CD4-positive, alpha-beta memory T cell (primary cell): ENCODE measurements at regions of chr5 and their contacts with region 1.

Region 1: GRCh38 chr5:157148734-157149615 is 6.3 kb upstream of the MED7 start:
- DNase-seq: peak; percentile 84 to 88 (median 85)
- H3K4me3 ChIP-seq: no peak overlapping the region
- H3K4me3 Mint-ChIP-seq: peak overlapping the region in 6 of 8 donors; percentile 23 to 66 (median 42)
- H3K27ac ChIP-seq: no peak overlapping the region
- H3K27ac Mint-ChIP-seq: peak overlapping the region; percentile 31 to 94 (median 85)
- H3K4me1 ChIP-seq: peaks cover 36% of the 10 kb centered on the region
- H3K4me1 Mint-ChIP-seq: peaks cover 28 to 42% (median 35%) of the 10 kb centered on the region in 4 donors
- H3K27me3 ChIP-seq: no peaks in the 10 kb centered on the region
- H3K27me3 Mint-ChIP-seq: no peaks in the 10 kb centered on the region

Region 2: GRCh38 chr5:157100140-157100679 is 48.8 kb before region 1 on chr5:
- CTCF ChIA-PET with region 1: no interaction called
- POLR2A ChIA-PET with region 1: no interaction called
- intact Hi-C with region 1: no loop called
- DNase-seq: no peak
- H3K4me3 ChIP-seq: no peak overlapping the region
- H3K4me3 Mint-ChIP-seq: no peak overlapping the region
- H3K27ac ChIP-seq: no peak overlapping the region
- H3K27ac Mint-ChIP-seq: peak overlapping the region in 2 of 7 donors; percentile 36 to 49
- H3K4me1 ChIP-seq: no peaks in the 10 kb centered on the region
- H3K4me1 Mint-ChIP-seq: peaks cover 0 to 2% (median 0%) of the 10 kb centered on the region in 4 donors
- H3K27me3 ChIP-seq: no peaks in the 10 kb centered on the region
- H3K27me3 Mint-ChIP-seq: no peaks in the 10 kb centered on the region

Region 3: DNA sequence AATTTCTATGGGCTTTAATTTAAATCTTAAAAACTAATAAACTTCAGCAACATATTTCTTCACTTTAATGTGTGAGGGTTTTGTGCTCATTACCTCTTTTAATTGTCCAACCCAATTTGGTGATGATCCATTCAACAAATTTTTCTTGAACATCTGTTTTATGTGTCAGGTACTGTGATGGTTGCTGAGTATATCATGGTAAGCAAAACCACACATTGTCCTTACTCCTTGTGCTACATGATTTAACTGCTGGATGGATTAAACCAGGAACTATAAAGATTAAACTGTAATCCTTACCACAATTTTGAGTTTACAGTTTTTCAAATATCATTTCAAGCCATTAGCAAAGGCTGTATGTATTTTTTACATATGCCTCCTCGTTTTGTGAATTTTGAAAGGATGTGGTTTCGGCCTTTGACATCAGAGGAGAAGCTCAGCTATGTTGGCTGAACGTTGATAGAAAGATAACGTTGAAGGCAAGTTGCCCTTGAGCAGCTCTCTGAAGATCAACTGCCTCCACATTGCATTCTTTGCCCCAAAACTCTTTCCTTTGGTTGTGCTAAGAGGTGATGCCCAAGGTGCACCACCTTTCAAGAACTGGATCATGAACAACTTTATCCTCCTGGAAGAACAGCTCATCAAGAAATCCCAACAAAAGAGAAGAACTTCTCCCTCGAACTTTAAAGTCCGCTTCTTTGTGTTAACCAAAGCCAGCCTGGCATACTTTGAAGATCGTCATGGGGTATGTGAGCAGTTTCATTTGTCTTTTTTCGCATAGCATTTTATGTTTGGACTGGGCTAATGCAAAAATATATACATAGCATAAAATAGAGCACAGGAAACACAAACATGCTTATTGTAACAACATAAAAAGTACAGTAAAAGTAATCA is 31.6 kb after region 1 on chr5 and contains the start of gene ITK:
- CTCF ChIA-PET with region 1: interaction called, 22 read pairs
- POLR2A ChIA-PET with region 1: interaction called, 71 read pairs
- intact Hi-C with region 1: loop called (anchors 1 kb)
- DNase-seq: peak; percentile 77 to 85 (median 81)
- H3K4me3 ChIP-seq: peak within 1 kb of the TSS; percentile 83 to 99
- H3K4me3 Mint-ChIP-seq: peak within 1 kb of the TSS; percentile 97 to 100 (median 99)
- H3K27ac ChIP-seq: peak within 1 kb of the TSS; percentile 77
- H3K27ac Mint-ChIP-seq: peak within 1 kb of the TSS; percentile 84 to 99 (median 97)
- H3K4me1 ChIP-seq: peaks cover 47% of the 10 kb centered on the region
- H3K4me1 Mint-ChIP-seq: peaks cover 28 to 67% (median 43%) of the 10 kb centered on the region in 4 donors
- H3K27me3 ChIP-seq: no peaks in the 10 kb centered on the region
- H3K27me3 Mint-ChIP-seq: no peaks in the 10 kb centered on the region
- total RNA-seq, gene ITK: 398 to 421 TPM

Region 4: GRCh38 chr5:157204765-157205164 is 55.8 kb after region 1 on chr5:
- CTCF ChIA-PET with region 1: interaction called, 23 read pairs
- POLR2A ChIA-PET with region 1: interaction called, 13 read pairs
- intact Hi-C with region 1: no loop called
- DNase-seq: peak in 3 of 5 donors; percentile 44 to 74 (median 57)
- H3K4me3 ChIP-seq: no peak overlapping the region
- H3K4me3 Mint-ChIP-seq: peak overlapping the region; percentile 42 to 96 (median 74)
- H3K27ac ChIP-seq: peak overlapping the region; percentile 55
- H3K27ac Mint-ChIP-seq: peak overlapping the region; percentile 81 to 94 (median 87)
- H3K4me1 ChIP-seq: peaks cover 99% of the 10 kb centered on the region
- H3K4me1 Mint-ChIP-seq: peaks cover 60 to 96% (median 81%) of the 10 kb centered on the region in 4 donors
- H3K27me3 ChIP-seq: no peaks in the 10 kb centered on the region
- H3K27me3 Mint-ChIP-seq: no peaks in the 10 kb centered on the region

Region 5: DNA sequence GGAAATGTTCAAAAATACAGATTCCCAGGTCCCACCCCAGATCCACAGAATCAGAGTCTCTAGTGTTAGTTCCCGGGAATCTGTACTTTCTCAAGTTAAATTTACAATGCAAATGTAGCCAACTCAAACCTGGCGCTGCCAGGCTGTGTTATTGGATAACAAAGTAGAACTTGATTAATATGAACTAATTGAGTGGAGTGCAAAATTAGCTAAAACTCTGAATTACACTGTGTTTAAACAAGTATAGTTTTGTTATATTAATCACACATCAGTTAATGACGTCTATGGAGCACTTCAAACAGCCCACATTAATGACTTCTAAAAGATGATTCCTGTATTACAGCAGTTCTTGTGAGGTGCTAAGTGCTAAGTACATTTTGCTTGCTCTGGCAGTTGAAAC is 84.5 kb after region 1 on chr5:
- CTCF ChIA-PET with region 1: interaction called, 13 read pairs
- POLR2A ChIA-PET with region 1: interaction called, 7 read pairs
- intact Hi-C with region 1: loop called (anchors 1 kb)
- DNase-seq: peak; percentile 47 to 83 (median 74)
- H3K4me3 ChIP-seq: no peak overlapping the region
- H3K4me3 Mint-ChIP-seq: peak overlapping the region in 4 of 8 donors; percentile 25 to 55 (median 47)
- H3K27ac ChIP-seq: peak overlapping the region; percentile 41
- H3K27ac Mint-ChIP-seq: peak overlapping the region; percentile 88 to 94 (median 90)
- H3K4me1 ChIP-seq: peaks cover 76% of the 10 kb centered on the region
- H3K4me1 Mint-ChIP-seq: peaks cover 32 to 62% (median 47%) of the 10 kb centered on the region in 4 donors
- H3K27me3 ChIP-seq: no peaks in the 10 kb centered on the region
- H3K27me3 Mint-ChIP-seq: no peaks in the 10 kb centered on the region

Region 6: GRCh38 chr5:157271740-157272271 is 122.8 kb after region 1 on chr5:
- CTCF ChIA-PET with region 1: interaction called, 7 read pairs
- POLR2A ChIA-PET with region 1: interaction called, 49 read pairs
- intact Hi-C with region 1: no loop called
- DNase-seq: peak; percentile 89 to 96 (median 93)
- H3K4me3 ChIP-seq: peak overlapping the region in 1 of 2 donors; percentile 33
- H3K4me3 Mint-ChIP-seq: peak overlapping the region; percentile 77 to 97 (median 86)
- H3K27ac ChIP-seq: peak overlapping the region; percentile 69
- H3K27ac Mint-ChIP-seq: peak overlapping the region; percentile 96 to 100 (median 98)
- H3K4me1 ChIP-seq: peaks cover 99% of the 10 kb centered on the region
- H3K4me1 Mint-ChIP-seq: peaks cover 73 to 96% (median 83%) of the 10 kb centered on the region in 4 donors
- H3K27me3 ChIP-seq: no peaks in the 10 kb centered on the region
- H3K27me3 Mint-ChIP-seq: no peaks in the 10 kb centered on the region

Region 7: DNA sequence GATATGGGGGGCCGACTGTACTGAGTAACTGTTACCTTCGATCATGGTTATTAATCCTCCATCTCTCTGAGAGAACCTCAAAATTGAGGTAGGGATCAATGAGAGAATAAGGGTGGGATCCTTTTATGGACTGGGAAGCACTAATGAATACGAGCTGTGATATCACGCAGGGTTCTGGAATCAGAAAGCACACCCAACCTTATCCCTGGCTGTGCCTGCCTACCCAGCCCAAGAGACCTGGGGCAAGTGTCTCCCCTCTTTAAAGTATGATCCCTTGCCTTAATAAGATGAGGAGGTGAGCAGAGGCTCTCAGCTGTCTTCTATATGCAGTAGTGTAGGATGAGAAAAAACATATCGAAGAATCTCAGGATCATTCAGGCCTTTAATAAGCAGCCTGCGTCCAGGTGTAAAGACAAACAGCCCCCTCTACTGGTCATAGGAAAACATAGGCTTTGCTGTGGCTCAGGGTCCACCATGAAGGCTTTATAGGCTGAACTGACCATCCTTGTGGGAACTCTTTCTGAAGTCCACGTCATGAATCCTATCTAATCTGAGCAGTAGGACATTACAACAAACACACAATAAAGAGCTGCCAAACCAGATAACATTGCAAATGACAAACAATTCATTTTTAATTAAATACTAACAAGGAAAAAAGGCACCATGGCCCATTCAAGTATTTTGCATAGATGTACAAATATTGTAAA is 327.9 kb after region 1 on chr5:
- CTCF ChIA-PET with region 1: no interaction called
- POLR2A ChIA-PET with region 1: interaction called, 4 read pairs
- intact Hi-C with region 1: loop called (anchors 5 kb)
- DNase-seq: peak in 4 of 5 donors; percentile 19 to 36 (median 28)
- H3K4me3 ChIP-seq: no peak overlapping the region
- H3K4me3 Mint-ChIP-seq: no peak overlapping the region
- H3K27ac ChIP-seq: no peak overlapping the region
- H3K27ac Mint-ChIP-seq: peak overlapping the region in 5 of 7 donors; percentile 20 to 70 (median 50)
- H3K4me1 ChIP-seq: peaks cover 35% of the 10 kb centered on the region
- H3K4me1 Mint-ChIP-seq: peaks cover 23 to 45% (median 29%) of the 10 kb centered on the region in 4 donors
- H3K27me3 ChIP-seq: no peaks in the 10 kb centered on the region
- H3K27me3 Mint-ChIP-seq: no peaks in the 10 kb centered on the region